ENCODE measurements at regions of chrX and their contacts with region 1.

Region 1: DNA sequence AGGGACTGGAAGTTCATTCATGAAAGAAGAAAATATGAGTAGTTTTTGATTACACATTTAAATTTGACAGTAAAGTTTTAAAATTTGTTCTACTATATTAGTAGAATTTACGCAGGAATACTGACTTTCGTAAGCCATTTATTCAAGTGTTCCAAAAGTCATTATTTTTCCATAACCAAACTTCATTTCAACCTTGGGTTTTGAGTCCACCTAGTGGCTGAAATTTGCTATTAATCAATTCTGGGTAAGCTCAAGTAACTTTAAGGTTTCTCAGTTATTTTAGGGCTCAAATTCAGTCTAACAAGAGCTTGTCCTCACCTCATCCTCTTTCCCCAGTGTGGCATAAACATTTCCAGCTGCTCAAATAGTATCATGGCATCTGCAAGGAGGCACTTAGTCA is 175.4 kb downstream of the SH3BGRL start:
- DNase-seq: no peak
- H3K4me3 ChIP-seq: no peak overlapping the region
- H3K27ac ChIP-seq: no peak overlapping the region
- H3K4me1 ChIP-seq: no peaks in the 10 kb centered on the region
- H3K27me3 ChIP-seq: no peaks in the 10 kb centered on the region
- CTCF ChIP-seq: peak in 5 of 6 experiments; percentile 27 to 55 (median 49)
- POLR2A ChIP-seq: no peak

Region 2: GRCh38 chrX:81174286-81174685 is 203.0 kb before region 1 on chrX:
- intact Hi-C with region 1: loop called (anchors 5 kb)
- DNase-seq: no peak
- H3K4me3 ChIP-seq: no peak overlapping the region
- H3K27ac ChIP-seq: no peak overlapping the region
- H3K4me1 ChIP-seq: no peaks in the 10 kb centered on the region
- H3K27me3 ChIP-seq: no peaks in the 10 kb centered on the region
- CTCF ChIP-seq: peak in 3 of 6 experiments; percentile 24 to 46 (median 29)
- POLR2A ChIP-seq: no peak

Measured in thyroid gland (tissue), 4 donors.